GM12878 (cell line): ENCODE measurements at regions of chr9 and their contacts with region 1.

Region 1: GRCh38 chr9:128322404-128323211 is at the starts of genes COQ4 and TRUB2:
- DNase-seq: peak; percentile 82
- ATAC-seq: peak; percentile 96
- H3K4me3 ChIP-seq: peak within 1 kb of the TSS; percentile 96
- H3K27ac ChIP-seq: peak within 1 kb of the TSS; percentile 69
- H3K4me1 ChIP-seq: peaks cover 6% of the 10 kb centered on the region
- H3K27me3 ChIP-seq: no peaks in the 10 kb centered on the region
- CTCF ChIP-seq: no peak
- EP300 ChIP-seq: no peak
- POLR2A ChIP-seq: peak; percentile 80
- RAD21 ChIP-seq: no peak
- polyA plus RNA-seq, gene COQ4: 3.8 to 9.1 TPM
- polyA plus RNA-seq, gene TRUB2: 2.8 to 5.5 TPM

Region 2: GRCh38 chr9:128275996-128276573 is 46.5 kb before region 1 on chr9 and contains the starts of genes GOLGA2 and SWI5:
- CTCF ChIA-PET with region 1: no interaction called
- POLR2A ChIA-PET with region 1: interaction called, 3 read pairs
- RAD21 ChIA-PET with region 1: no interaction called
- SMC1A ChIA-PET with region 1: no interaction called
- in situ Hi-C with region 1: no loop called
- intact Hi-C with region 1: loop called (anchors 1 kb)
- DNase-seq: peak; percentile 99
- ATAC-seq: peak; percentile 98
- H3K4me3 ChIP-seq: peak within 1 kb of the TSS; percentile 99
- H3K27ac ChIP-seq: peak within 1 kb of the TSS; percentile 89
- H3K4me1 ChIP-seq: 0 out of 2 replicates have a peak, but pooled peaks cover 4% of the 10 kb centered on the region
- H3K27me3 ChIP-seq: no peaks in the 10 kb centered on the region
- CTCF ChIP-seq: no peak
- EP300 ChIP-seq: no peak
- POLR2A ChIP-seq: peak; percentile 99
- RAD21 ChIP-seq: no peak
- polyA plus RNA-seq, gene GOLGA2: 5.9 to 8.0 TPM
- polyA plus RNA-seq, gene SWI5: 14.8 to 19.3 TPM

Region 3: GRCh38 chr9:128339771-128340690 is 17.4 kb after region 1 on chr9 and contains the start of gene SLC27A4:
- CTCF ChIA-PET with region 1: interaction called, 8 read pairs
- POLR2A ChIA-PET with region 1: interaction called, 3 read pairs
- RAD21 ChIA-PET with region 1: interaction called, 4 read pairs
- SMC1A ChIA-PET with region 1: no interaction called
- in situ Hi-C with region 1: no loop called
- intact Hi-C with region 1: loop called (anchors 1 kb)
- DNase-seq: peak; percentile 61
- ATAC-seq: peak; percentile 91
- H3K4me3 ChIP-seq: peak within 1 kb of the TSS; percentile 87
- H3K27ac ChIP-seq: peak within 1 kb of the TSS; percentile 24; the same call in 1 of the 2 replicates
- H3K4me1 ChIP-seq: no peaks in the 10 kb centered on the region
- H3K27me3 ChIP-seq: no peaks in the 10 kb centered on the region
- CTCF ChIP-seq: no peak
- EP300 ChIP-seq: no peak
- POLR2A ChIP-seq: peak; percentile 41; the same call in 1 of the 2 replicates
- RAD21 ChIP-seq: no peak
- polyA plus RNA-seq, gene SLC27A4: 0.13 to 1.1 TPM

Region 4: GRCh38 chr9:128455849-128456612 is 133.4 kb after region 1 on chr9 and contains the start of gene ODF2:
- CTCF ChIA-PET with region 1: no interaction called
- POLR2A ChIA-PET with region 1: no interaction called
- RAD21 ChIA-PET with region 1: no interaction called
- SMC1A ChIA-PET with region 1: no interaction called
- in situ Hi-C with region 1: no loop called
- intact Hi-C with region 1: no loop called
- DNase-seq: peak; percentile 73
- ATAC-seq: peak; percentile 95
- H3K4me3 ChIP-seq: peak within 1 kb of the TSS; percentile 92
- H3K27ac ChIP-seq: peak within 1 kb of the TSS; percentile 76
- H3K4me1 ChIP-seq: peaks cover 3% of the 10 kb centered on the region; the same call in 1 of the 2 replicates
- H3K27me3 ChIP-seq: no peaks in the 10 kb centered on the region; a peak in 1 of 4 replicates
- CTCF ChIP-seq: 0 out of 6 replicates have a peak, but pooled peaks of 1 of the 3 experiments have one; percentile 1
- EP300 ChIP-seq: no peak
- POLR2A ChIP-seq: peak; percentile 91
- RAD21 ChIP-seq: no peak
- polyA plus RNA-seq, gene ODF2: 8.7 to 14.3 TPM